Heart left ventricle (tissue), 16 donors: ENCODE measurements at regions of chr20 and their contacts with region 1.

Region 1: DNA sequence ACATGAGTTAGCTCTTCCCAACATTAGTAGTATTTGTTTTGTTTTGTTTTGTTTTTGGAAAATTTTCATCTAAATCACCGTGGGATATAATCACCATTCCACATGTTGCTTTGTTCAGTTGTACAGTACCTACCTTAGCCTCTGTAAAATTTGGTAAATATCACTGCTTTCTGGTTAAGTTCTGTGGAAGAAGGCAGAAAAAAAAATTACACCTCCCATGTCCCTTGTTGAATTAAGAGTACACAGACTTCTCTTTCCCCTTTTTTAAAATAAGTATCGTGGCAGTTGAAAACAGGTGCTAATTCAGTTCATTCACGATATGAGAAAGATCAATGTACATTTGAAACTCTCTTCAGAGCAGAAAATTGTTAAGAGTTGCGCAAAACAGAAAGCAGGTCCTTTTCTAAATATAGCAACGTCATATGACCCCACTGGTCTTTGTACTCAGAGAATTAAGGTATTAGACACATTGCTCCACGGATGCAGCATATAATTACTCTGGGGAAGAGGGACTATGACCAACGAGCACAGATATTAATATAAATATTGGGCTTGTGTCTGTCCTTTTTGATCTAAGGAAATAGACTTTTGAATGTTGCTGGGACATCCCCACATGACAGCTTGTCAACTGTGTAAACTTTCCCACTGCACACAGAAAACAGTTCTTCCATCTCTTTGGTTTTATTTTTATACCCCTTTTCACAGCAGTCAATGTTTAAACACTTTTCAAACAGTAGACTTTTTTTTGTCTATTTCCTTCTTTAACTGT is 58.6 kb upstream of the ZNF217 start:
- DNase-seq: no peak
- ATAC-seq: peak; percentile 40 to 81 (median 62)
- H3K4me3 ChIP-seq: peak overlapping the region in 8 of 12 donors; percentile 2 to 38 (median 20)
- H3K27ac ChIP-seq: peak overlapping the region in 11 of 12 donors; percentile 33 to 86 (median 46)
- H3K4me1 ChIP-seq: peaks cover 0 to 54% (median 17%) of the 10 kb centered on the region in 12 donors
- H3K27me3 ChIP-seq: no peaks in the 10 kb centered on the region
- CTCF ChIP-seq: no peak
- POLR2A ChIP-seq: no peak

Region 2: GRCh38 chr20:53609491-53610445 is 42.5 kb before region 1 on chr20:
- intact Hi-C with region 1: loop called in 1 of 10 experiments (anchors 5 kb)
- DNase-seq: peak in 4 of 5 donors; percentile 26 to 74 (median 44)
- ATAC-seq: no peak
- H3K4me3 ChIP-seq: peak overlapping the region in 3 of 12 donors; percentile 28 to 50 (median 33)
- H3K27ac ChIP-seq: peak overlapping the region in 10 of 12 donors; percentile 15 to 96 (median 38)
- H3K4me1 ChIP-seq: peaks cover 0 to 63% (median 4%) of the 10 kb centered on the region in 12 donors
- H3K27me3 ChIP-seq: no peaks in the 10 kb centered on the region
- CTCF ChIP-seq: no peak
- POLR2A ChIP-seq: no peak